MCF 10A (cell line): ENCODE measurements at regions of chr11 and their contacts with region 1.

Region 1: GRCh38 chr11:122153746-122154145 is 37.7 kb upstream of the BLID start:
- DNase-seq: no peak
- H3K4me3 Mint-ChIP-seq: no peak overlapping the region
- H3K27ac Mint-ChIP-seq: peak overlapping the region; percentile 54
- H3K4me1 Mint-ChIP-seq: peaks cover 49% of the 10 kb centered on the region
- H3K27me3 Mint-ChIP-seq: no peaks in the 10 kb centered on the region
- CTCF ChIP-seq: no peak

Region 2: DNA sequence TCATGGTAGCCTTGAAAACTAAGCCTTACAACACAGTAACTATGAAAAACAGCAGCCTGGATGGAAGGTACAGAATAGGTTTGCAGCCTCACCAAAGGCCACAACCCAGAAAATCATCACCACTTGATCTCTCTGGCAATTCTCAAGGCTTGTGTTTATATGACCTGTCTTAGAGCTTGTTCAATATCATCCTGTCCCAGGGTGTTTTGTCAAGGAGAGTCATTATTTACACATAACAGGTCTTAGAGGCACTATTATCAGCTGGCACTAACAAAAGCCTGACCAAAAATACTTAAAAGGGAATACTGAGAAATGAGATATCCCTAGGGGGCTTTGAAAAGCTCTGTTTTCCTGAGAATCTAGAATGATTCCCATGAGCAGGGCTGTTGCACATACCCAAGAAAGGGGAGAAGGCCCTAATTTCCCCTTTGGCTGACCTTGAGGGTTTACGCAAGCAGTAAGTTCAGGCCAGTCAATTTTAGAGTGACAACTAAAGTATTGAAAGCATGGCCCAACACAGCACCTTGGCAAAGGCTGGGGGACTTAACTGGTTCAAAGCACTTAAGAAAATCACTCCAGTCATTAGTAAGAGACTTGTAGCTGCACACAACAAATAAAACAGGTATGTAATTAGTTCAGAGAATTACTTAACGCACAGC is 853.3 kb before region 1 on chr11:
- CTCF ChIA-PET with region 1: no interaction called
- POLR2A ChIA-PET with region 1: no interaction called
- intact Hi-C with region 1: no loop called
- DNase-seq: no peak
- H3K4me3 Mint-ChIP-seq: no peak overlapping the region
- H3K27ac Mint-ChIP-seq: no peak overlapping the region
- H3K4me1 Mint-ChIP-seq: peaks cover 17% of the 10 kb centered on the region
- H3K27me3 Mint-ChIP-seq: no peaks in the 10 kb centered on the region
- CTCF ChIP-seq: no peak

Region 3: DNA sequence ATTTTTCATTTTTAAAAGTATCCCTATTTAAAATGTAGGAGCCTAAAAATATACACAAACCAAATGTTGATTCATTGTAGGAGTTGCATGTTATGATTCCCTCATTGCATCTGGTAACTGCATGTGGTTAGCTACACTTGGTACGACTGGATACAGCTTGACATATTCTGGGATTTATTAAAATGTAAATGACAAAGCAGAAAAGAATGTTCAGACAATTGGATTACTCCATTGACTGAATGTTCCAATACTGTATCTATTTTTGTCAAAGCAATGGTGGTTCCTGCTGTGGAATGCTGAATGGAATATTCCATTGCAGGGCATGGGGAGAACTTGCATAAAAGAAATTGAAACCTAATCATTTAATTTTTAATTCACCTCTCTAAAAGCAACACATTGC is 68.5 kb before region 1 on chr11:
- CTCF ChIA-PET with region 1: no interaction called
- POLR2A ChIA-PET with region 1: no interaction called
- intact Hi-C with region 1: no loop called
- DNase-seq: peak; percentile 65
- H3K4me3 Mint-ChIP-seq: no peak overlapping the region
- H3K27ac Mint-ChIP-seq: peak overlapping the region; percentile 85
- H3K4me1 Mint-ChIP-seq: peaks cover 23% of the 10 kb centered on the region
- H3K27me3 Mint-ChIP-seq: no peaks in the 10 kb centered on the region
- CTCF ChIP-seq: no peak

Region 4: GRCh38 chr11:122137081-122137793 is 16.5 kb before region 1 on chr11:
- CTCF ChIA-PET with region 1: interaction called, 5 read pairs
- POLR2A ChIA-PET with region 1: interaction called, 82 read pairs
- intact Hi-C with region 1: no loop called
- DNase-seq: peak; percentile 70
- H3K4me3 Mint-ChIP-seq: no peak overlapping the region
- H3K27ac Mint-ChIP-seq: peak overlapping the region; percentile 89
- H3K4me1 Mint-ChIP-seq: peaks cover 46% of the 10 kb centered on the region
- H3K27me3 Mint-ChIP-seq: no peaks in the 10 kb centered on the region
- CTCF ChIP-seq: no peak

Region 5: GRCh38 chr11:122215244-122215992 is 61.7 kb after region 1 on chr11:
- CTCF ChIA-PET with region 1: no interaction called
- POLR2A ChIA-PET with region 1: no interaction called
- intact Hi-C with region 1: no loop called
- DNase-seq: peak; percentile 66
- H3K4me3 Mint-ChIP-seq: no peak overlapping the region
- H3K27ac Mint-ChIP-seq: no peak overlapping the region
- H3K4me1 Mint-ChIP-seq: peaks cover 21% of the 10 kb centered on the region
- H3K27me3 Mint-ChIP-seq: no peaks in the 10 kb centered on the region
- CTCF ChIP-seq: peak; percentile 89